T-cell (primary cell): ENCODE measurements at regions of chr17 and their contacts with region 1.

Region 1: DNA sequence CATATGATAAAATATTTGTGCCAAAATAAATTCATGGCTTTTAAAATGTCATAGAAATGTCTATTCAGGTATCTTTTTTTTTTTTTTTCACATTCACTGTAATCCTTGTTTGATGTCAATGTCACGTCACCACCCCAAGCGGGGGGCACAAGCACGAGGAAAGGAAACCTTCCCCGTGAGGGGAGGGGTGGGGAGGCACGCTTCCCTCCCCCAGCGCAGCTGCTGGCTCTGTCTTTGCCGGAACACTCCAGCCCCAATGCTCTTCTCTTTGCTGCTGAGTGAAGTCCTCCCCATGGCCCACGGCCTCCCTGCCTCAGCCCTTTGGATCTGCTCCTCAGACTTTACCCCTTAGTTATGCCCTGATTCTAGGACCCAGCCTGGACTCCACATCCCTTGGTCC is 1.5 kb downstream of the SLC35G3 start:
- DNase-seq: peak in 24 of 35 experiments; percentile 25 to 70 (median 46)
- ATAC-seq: peak; percentile 23 to 83 (median 60)
- H3K4me3 ChIP-seq: no peak overlapping the region
- H3K4me3 Mint-ChIP-seq: peak overlapping the region in 2 of 3 donors; percentile 32 to 58
- H3K27ac ChIP-seq: no peak overlapping the region
- H3K27ac Mint-ChIP-seq: peak overlapping the region; percentile 39 to 91
- H3K4me1 ChIP-seq: peaks cover 25 to 32% of the 10 kb centered on the region in 2 experiments
- H3K4me1 Mint-ChIP-seq: peaks cover 45 to 55% (median 50%) of the 10 kb centered on the region in 3 donors
- H3K27me3 ChIP-seq: no peaks in the 10 kb centered on the region
- H3K27me3 Mint-ChIP-seq: peaks cover 0 to 1% of the 10 kb centered on the region in 2 donors

Region 2: DNA sequence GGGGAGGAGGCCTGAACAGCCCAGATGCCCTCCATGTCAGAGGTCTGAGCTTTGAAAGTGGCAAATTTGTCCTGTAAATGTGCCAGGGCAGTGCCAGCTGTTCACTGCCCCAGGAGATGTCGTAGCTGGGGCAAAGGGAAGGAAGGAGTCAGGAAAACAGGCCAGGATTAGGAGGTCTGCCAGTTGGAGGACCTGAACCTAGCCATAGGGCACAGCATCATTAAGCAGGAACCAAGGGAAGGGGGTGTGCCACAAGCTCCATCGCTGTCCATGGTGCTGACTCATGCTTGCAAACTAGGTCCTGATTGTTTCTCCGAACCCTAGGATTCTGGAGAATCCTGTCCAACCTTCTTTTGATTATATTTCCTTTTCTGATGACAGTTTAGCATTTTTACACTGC is 489.2 kb before region 1 on chr17:
- CTCF ChIA-PET with region 1: no interaction called
- POLR2A ChIA-PET with region 1: interaction called in 1 of 2 experiments, 12 read pairs
- DNase-seq: peak in 7 of 35 experiments; percentile 1 to 41 (median 8)
- ATAC-seq: no peak
- H3K4me3 ChIP-seq: no peak overlapping the region
- H3K4me3 Mint-ChIP-seq: no peak overlapping the region
- H3K27ac ChIP-seq: no peak overlapping the region
- H3K27ac Mint-ChIP-seq: no peak overlapping the region
- H3K4me1 ChIP-seq: no peaks in the 10 kb centered on the region
- H3K4me1 Mint-ChIP-seq: no peaks in the 10 kb centered on the region
- H3K27me3 ChIP-seq: peaks cover 2 to 8% of the 10 kb centered on the region in 2 experiments
- H3K27me3 Mint-ChIP-seq: peaks cover 18 to 35% of the 10 kb centered on the region in 2 donors

Region 3: GRCh38 chr17:34895383-34895782 is 297.3 kb before region 1 on chr17:
- CTCF ChIA-PET with region 1: no interaction called
- POLR2A ChIA-PET with region 1: no interaction called
- DNase-seq: no peak
- ATAC-seq: no peak
- H3K4me3 ChIP-seq: no peak overlapping the region
- H3K4me3 Mint-ChIP-seq: no peak overlapping the region
- H3K27ac ChIP-seq: no peak overlapping the region
- H3K27ac Mint-ChIP-seq: no peak overlapping the region
- H3K4me1 ChIP-seq: peaks cover 0 to 6% of the 10 kb centered on the region in 2 experiments
- H3K4me1 Mint-ChIP-seq: no peaks in the 10 kb centered on the region
- H3K27me3 ChIP-seq: peaks cover 0 to 56% of the 10 kb centered on the region in 2 experiments
- H3K27me3 Mint-ChIP-seq: peaks cover 50 to 64% of the 10 kb centered on the region in 2 donors

Region 4: GRCh38 chr17:35341411-35341992 is 148.8 kb after region 1 on chr17:
- CTCF ChIA-PET with region 1: no interaction called
- POLR2A ChIA-PET with region 1: no interaction called
- DNase-seq: peak in 8 of 35 experiments; percentile 2 to 47 (median 16)
- ATAC-seq: peak in 1 of 4 experiments; percentile 39
- H3K4me3 ChIP-seq: no peak overlapping the region
- H3K4me3 Mint-ChIP-seq: peak overlapping the region; percentile 14 to 58 (median 51)
- H3K27ac ChIP-seq: no peak overlapping the region
- H3K27ac Mint-ChIP-seq: peak overlapping the region; percentile 35 to 90
- H3K4me1 ChIP-seq: peaks cover 7 to 19% of the 10 kb centered on the region in 2 experiments
- H3K4me1 Mint-ChIP-seq: peaks cover 25 to 48% (median 45%) of the 10 kb centered on the region in 3 donors
- H3K27me3 ChIP-seq: no peaks in the 10 kb centered on the region
- H3K27me3 Mint-ChIP-seq: no peaks in the 10 kb centered on the region